ENCODE measurements at regions of chr5 and their contacts with region 1.

Region 1: GRCh38 chr5:36305571-36306326 is 4.0 kb upstream of the RANBP3L start:
- DNase-seq: peak; percentile 60
- H3K4me3 ChIP-seq: no peak overlapping the region
- H3K27ac ChIP-seq: no peak overlapping the region
- H3K4me1 ChIP-seq: peaks cover 10% of the 10 kb centered on the region
- H3K27me3 ChIP-seq: no peaks in the 10 kb centered on the region
- CTCF ChIP-seq: peak; percentile 87

Region 2: GRCh38 chr5:36073595-36074216 is 232.0 kb before region 1 on chr5:
- CTCF ChIA-PET with region 1: interaction called, 3 read pairs
- POLR2A ChIA-PET with region 1: no interaction called
- intact Hi-C with region 1: loop called (anchors 2 kb)
- DNase-seq: peak; percentile 87
- H3K4me3 ChIP-seq: peak overlapping the region; percentile 5
- H3K27ac ChIP-seq: peak overlapping the region; percentile 65
- H3K4me1 ChIP-seq: peaks cover 56% of the 10 kb centered on the region
- H3K27me3 ChIP-seq: no peaks in the 10 kb centered on the region
- CTCF ChIP-seq: peak; percentile 71

Region 3: DNA sequence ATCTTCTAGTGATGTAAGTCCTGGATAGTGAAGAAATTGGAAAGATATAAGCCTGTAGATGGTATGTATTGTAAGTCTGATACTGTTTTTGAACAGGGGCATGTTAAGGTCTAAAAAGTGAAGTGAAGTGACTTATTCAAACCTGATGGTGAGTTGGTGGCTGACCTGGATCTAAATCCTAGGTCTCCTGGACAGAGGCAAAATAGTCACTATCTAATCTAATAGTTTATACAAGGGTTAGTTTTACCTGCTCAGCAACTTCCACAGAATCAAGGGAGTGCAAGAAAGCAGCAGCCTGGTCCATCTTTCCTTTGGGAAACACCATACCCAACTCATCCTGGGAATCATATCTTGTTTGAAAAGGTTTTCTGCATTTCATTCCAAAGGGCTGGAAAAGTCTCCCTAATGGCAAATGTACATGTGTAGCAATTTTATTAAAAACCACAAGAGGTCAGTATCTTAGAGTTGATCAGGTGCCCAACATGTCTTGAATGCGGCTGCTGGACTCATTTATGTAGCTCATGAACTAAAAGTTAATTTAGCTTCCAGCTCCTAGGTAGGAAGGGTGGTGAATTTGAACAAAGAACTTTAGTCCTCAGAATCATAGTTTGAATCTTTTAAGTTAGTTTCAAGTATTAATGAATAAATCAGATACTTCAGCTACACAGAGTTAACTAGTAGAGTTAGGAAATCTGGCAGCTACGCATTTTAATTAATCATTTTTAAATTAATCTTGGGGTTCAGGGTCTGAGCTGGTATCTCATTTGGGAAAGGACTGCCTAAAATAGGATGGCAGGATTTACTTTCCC is 127.8 kb before region 1 on chr5:
- CTCF ChIA-PET with region 1: no interaction called
- POLR2A ChIA-PET with region 1: no interaction called
- intact Hi-C with region 1: loop called (anchors 2 kb)
- DNase-seq: peak; percentile 49
- H3K4me3 ChIP-seq: no peak overlapping the region
- H3K27ac ChIP-seq: no peak overlapping the region
- H3K4me1 ChIP-seq: peaks cover 7% of the 10 kb centered on the region
- H3K27me3 ChIP-seq: no peaks in the 10 kb centered on the region
- CTCF ChIP-seq: peak; percentile 65

Region 4: DNA sequence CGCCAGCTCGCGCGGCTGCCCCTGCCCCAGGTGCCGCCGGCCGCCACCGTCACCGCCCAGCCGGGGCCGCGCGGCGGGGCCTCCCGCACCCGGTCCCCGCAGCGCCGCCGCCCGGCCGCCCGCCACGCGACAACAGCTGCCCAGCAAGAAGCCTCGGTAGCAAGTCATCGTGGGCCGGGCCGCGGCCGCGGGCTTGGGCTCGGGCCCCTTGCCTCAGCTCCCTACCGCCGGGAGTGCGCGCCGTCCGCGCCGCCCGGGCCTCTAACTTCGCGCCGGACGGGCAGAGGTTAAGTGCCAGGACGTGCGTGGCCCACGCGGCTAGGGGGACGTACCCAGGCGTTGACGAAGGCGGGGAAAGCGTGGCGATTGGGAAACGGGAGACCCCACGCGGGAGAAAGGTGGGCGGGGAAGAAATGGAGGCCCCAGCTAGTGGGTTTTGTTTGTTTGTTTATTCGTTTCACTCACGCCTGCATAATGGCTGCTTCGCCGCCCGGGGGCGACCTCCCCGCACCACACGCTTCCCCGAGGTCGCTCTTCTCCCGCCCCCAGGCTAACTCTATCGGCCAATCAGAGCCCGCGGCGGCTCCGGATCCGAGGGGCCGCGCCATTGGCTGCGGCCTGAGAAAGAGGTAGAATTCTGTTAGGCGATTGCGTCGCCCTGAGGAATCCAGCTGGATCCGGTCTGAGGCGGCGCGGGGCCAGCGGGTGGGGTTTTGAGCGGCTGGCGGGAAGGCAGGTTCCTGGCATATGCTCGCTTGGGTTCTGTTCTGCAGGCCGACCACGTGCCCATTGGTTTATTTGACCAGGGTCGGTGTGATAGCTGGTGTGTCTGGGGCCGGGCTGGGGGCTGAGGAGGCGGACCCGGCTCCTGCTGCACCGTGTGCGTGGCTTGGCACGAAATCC is 63.9 kb before region 1 on chr5 and contains the start of gene NADK2:
- CTCF ChIA-PET with region 1: no interaction called
- POLR2A ChIA-PET with region 1: no interaction called
- intact Hi-C with region 1: loop called (anchors 2 kb)
- DNase-seq: peak; percentile 99
- H3K4me3 ChIP-seq: peak within 1 kb of the TSS; percentile 84
- H3K27ac ChIP-seq: peak within 1 kb of the TSS; percentile 92
- H3K4me1 ChIP-seq: peaks cover 26% of the 10 kb centered on the region
- H3K27me3 ChIP-seq: no peaks in the 10 kb centered on the region
- CTCF ChIP-seq: peak; percentile 78
- total RNA-seq, gene NADK2: 31.6 and 37.1 TPM in 2 replicates

Measured in A673 (cell line).